HepG2 (cell line): ENCODE measurements at regions of chr16 and their contacts with region 1.

Region 1: GRCh38 chr16:71600822-71601221 is 23.9 kb upstream of the TAT start:
- DNase-seq: peak; percentile 50
- ATAC-seq: peak; percentile 99
- H3K4me3 ChIP-seq: peak overlapping the region in 1 of 3 experiments; percentile 54; a peak in 2 of 6 replicates
- H3K27ac ChIP-seq: peak overlapping the region; percentile 16
- H3K4me1 ChIP-seq: peaks cover 59% of the 10 kb centered on the region
- H3K27me3 ChIP-seq: no peaks in the 10 kb centered on the region
- CTCF ChIP-seq: peak; percentile 83
- EP300 ChIP-seq: no peak
- POLR2A ChIP-seq: no peak
- RAD21 ChIP-seq: peak; percentile 36; the same call in 1 of the 2 replicates

Region 2: DNA sequence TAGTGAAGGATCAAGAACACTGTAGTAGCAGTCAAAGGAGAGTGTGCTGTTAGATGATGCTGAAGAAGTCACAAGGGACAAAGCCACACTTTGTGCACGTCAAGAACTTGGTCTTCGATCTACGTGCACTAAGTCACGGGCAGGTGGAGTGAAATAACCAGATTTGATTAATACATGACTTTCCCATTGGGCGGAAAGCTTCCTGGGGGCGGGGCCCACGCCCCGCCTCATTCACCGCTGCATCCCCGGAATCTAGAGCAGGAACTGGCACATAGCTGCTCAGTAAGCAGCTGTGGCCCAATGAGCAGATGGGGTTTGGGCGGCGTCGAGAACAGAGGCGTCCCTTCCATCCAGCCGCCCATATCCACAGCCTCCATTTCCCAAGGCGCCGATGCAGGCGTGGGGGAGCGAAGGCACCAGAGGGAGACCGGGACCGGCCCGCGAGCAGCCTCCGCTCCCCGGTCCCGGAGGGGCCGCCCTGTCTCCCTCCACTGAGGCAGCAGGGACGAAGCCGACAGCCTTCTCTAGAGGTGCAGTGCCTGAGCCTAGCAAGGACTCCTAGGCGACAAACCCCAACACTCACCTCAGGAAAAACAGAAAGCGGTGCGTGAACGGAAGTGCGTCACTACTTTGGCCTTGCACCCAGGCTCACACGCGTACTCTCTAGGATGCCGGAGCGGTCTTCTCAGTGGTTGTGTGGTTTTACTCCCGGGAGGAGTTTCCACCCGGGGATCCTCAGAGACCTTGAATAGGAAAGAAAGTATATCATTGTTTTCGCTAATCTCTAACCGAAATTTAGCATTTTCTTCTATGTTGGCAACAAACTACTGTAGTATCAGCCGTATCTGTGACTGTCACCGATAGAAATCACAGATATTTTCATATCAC is 116.6 kb before region 1 on chr16:
- CTCF ChIA-PET with region 1: no interaction called
- POLR2A ChIA-PET with region 1: no interaction called
- in situ Hi-C with region 1: loop called (anchors 10 kb)
- intact Hi-C with region 1: no loop called
- DNase-seq: peak; percentile 91
- ATAC-seq: peak; percentile 93
- H3K4me3 ChIP-seq: peak overlapping the region; percentile 81 to 95 (median 88)
- H3K27ac ChIP-seq: peak overlapping the region; percentile 83
- H3K4me1 ChIP-seq: peaks cover 24% of the 10 kb centered on the region
- H3K27me3 ChIP-seq: peaks cover 0 to 4% of the 10 kb centered on the region in 2 experiments; a peak in 2 of 5 replicates
- CTCF ChIP-seq: no peak; the same call in 1 of the 2 replicates
- EP300 ChIP-seq: no peak
- POLR2A ChIP-seq: peak; percentile 85 to 86
- RAD21 ChIP-seq: peak; percentile 46; the same call in 1 of the 2 replicates

Region 3: DNA sequence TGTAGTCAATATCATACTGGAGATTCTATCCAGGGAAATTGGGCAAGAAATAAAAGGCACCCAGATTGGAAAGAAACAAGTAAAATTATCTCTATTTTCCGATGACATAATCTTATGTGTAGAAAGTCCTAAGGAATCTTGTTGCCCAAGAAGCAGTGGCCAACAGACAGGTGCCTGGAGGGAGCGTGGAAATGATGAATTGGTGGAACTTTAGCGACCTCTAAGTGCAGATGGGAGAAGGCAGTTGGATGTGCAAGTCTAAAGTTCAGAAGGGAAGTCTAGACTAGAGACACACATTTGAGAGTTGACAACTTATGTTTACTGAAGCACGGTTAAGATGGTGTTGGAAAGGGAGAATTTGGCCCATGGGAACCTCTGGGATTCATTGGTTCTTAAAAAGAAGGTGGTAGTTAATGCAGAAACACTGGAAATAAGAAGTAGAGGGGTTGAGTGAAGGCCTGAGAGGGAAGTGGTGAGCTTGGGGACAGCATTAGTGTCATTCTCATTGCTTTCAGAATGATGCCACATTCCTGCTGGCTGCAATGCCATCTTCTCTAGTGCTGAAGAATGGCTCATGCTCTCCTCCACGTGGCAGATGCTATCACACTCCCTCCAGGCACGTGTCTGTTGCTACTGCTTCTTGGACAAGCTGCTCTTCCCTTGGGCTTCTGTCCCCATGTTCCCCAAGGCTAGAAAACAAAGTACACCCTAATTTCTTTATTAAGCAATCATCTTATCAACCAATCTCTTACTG is 47.9 kb before region 1 on chr16:
- CTCF ChIA-PET with region 1: no interaction called
- POLR2A ChIA-PET with region 1: no interaction called
- in situ Hi-C with region 1: no loop called
- intact Hi-C with region 1: no loop called
- DNase-seq: peak; percentile 64
- ATAC-seq: peak; percentile 93
- H3K4me3 ChIP-seq: peak overlapping the region in 1 of 3 experiments; percentile 13; a peak in 1 of 6 replicates
- H3K27ac ChIP-seq: no peak overlapping the region
- H3K4me1 ChIP-seq: peaks cover 29% of the 10 kb centered on the region
- H3K27me3 ChIP-seq: no peaks in the 10 kb centered on the region
- CTCF ChIP-seq: peak; percentile 84
- EP300 ChIP-seq: no peak
- POLR2A ChIP-seq: no peak
- RAD21 ChIP-seq: peak; percentile 55; the same call in 1 of the 2 replicates

Region 4: DNA sequence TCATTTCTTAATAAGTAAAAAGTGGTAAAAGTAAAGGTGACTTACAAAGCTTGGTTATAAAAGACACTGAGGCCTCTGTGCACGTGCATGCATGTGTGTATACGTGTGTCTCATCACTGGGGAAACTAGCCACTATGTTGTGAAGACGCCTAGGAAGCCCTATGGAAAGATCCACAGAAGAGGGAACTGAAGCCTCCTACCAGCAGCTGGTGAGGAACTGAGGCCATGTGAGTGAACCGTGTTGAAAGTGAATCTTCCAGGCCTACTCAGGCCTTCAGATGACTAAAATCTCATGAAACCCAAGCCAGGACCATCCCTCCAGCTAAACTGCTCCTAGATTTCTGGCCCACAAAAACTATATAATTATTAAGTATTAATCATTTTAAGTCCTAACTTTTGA is 100.0 kb after region 1 on chr16:
- CTCF ChIA-PET with region 1: no interaction called
- POLR2A ChIA-PET with region 1: no interaction called
- in situ Hi-C with region 1: no loop called
- intact Hi-C with region 1: no loop called
- DNase-seq: no peak
- ATAC-seq: no peak
- H3K4me3 ChIP-seq: no peak overlapping the region
- H3K27ac ChIP-seq: no peak overlapping the region
- H3K4me1 ChIP-seq: no peaks in the 10 kb centered on the region
- H3K27me3 ChIP-seq: no peaks in the 10 kb centered on the region
- CTCF ChIP-seq: no peak
- EP300 ChIP-seq: no peak
- POLR2A ChIP-seq: no peak
- RAD21 ChIP-seq: no peak